A673 (cell line): ENCODE measurements at regions of chr16 and their contacts with region 1.

Region 1: GRCh38 chr16:84672276-84673202 is 24.2 kb downstream of the KLHL36 start:
- DNase-seq: peak; percentile 77
- H3K4me3 ChIP-seq: no peak overlapping the region
- H3K27ac ChIP-seq: no peak overlapping the region
- H3K4me1 ChIP-seq: peaks cover 5% of the 10 kb centered on the region
- H3K27me3 ChIP-seq: no peaks in the 10 kb centered on the region
- CTCF ChIP-seq: peak; percentile 92

Region 2: DNA sequence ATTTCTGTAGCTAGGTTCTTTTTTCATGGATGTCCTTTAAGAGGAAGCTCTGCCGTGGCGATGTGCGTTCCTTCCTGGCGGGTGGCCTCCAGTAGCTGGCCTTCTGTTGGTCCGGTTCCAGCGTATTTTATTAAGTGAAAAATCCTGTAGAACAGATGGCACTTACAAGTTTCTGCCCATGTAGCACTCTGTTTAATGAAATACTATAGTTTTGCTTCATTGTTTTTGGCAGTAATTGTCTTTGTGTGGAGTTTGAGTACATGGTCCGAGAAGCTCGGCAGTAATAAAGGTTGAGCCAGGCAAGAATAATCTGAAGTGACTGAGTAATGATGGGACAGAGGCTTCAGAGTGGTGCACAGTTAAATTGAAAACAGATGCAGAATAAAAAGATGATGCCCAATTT is 47.6 kb after region 1 on chr16:
- CTCF ChIA-PET with region 1: interaction called, 21 read pairs
- POLR2A ChIA-PET with region 1: no interaction called
- intact Hi-C with region 1: loop called (anchors 2 kb)
- DNase-seq: peak; percentile 89
- H3K4me3 ChIP-seq: peak overlapping the region; percentile 24
- H3K27ac ChIP-seq: peak overlapping the region; percentile 64
- H3K4me1 ChIP-seq: peaks cover 65% of the 10 kb centered on the region
- H3K27me3 ChIP-seq: no peaks in the 10 kb centered on the region
- CTCF ChIP-seq: no peak

Region 3: DNA sequence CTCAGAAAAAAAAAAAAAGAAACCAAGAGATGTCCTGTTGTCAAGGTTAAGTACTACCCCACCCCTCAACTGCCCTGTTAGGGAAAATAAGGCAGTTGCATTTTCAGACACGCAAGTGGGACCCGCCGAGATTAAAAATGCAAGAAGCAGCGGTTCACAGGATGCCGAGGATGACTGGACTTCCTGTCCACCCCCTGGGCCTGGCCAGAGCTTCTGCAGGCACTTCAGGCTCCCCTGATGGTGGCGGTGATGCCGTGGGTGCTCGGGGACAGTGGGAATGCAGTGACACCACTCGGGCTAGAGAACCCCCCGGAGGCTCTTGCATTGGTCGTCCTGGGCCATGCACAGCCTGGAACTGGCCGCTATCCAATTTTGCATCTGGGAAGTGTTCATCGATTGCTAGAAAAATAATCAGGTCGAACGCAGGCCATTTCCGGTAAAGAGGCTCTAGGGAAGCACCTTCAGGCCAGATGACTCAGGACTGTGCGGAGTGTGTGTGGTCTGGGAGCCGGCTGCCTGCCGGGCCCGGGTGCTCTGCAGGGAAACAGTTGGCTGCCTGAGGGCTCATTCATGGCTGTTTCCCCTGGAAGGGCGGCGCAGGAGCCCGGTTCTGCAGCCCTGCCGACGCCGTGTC is 133.8 kb after region 1 on chr16:
- CTCF ChIA-PET with region 1: no interaction called
- POLR2A ChIA-PET with region 1: no interaction called
- intact Hi-C with region 1: no loop called
- DNase-seq: peak; percentile 49
- H3K4me3 ChIP-seq: peak overlapping the region; percentile 13
- H3K27ac ChIP-seq: no peak overlapping the region
- H3K4me1 ChIP-seq: no peaks in the 10 kb centered on the region
- H3K27me3 ChIP-seq: no peaks in the 10 kb centered on the region
- CTCF ChIP-seq: no peak